Breast epithelium (tissue), 4 donors: ENCODE measurements at regions of chr3 and their contacts with region 1.

Region 1: DNA sequence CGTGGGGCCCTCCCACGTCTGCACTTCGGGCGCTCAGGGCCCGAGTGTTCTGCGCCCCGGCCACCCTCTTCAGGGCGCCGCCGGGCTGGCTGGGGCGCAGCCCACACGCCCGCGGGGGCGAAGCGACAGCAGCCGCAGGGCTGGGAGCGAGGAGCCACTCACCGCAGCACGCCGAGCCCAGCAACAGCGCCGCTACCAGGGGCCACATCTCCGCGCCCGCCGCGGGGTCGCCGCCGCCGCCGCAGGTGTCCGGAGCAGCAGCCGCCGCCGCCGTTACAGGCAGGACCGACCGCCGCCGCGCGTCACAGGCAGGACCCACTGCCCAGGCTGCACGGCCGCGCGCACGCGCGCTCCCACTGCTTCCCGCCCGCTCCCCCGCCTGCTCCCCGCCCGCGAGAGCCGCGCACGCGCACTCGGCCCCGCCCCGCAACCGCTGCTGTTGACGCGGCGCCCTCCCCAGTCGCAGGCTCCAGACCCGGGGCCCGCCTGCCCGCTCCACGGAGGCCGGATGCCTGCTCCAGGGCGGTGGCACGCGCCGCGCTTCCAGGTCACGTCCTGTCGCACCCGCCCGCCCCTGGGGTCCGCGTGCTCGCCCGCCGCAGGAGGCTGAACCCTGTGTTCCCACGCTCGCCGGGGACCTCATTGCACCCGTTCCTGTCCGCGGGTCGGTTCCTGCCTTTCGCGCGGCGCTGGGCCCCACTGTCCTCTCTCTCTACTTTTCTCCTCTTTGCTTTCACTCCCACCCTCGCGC is at the start of gene CD47:
- DNase-seq: peak; percentile 91 to 93
- H3K4me3 ChIP-seq: peak within 1 kb of the TSS; percentile 80 to 97 (median 96)
- H3K27ac ChIP-seq: peak within 1 kb of the TSS; percentile 92 to 96
- H3K4me1 ChIP-seq: peaks cover 0 to 4% of the 10 kb centered on the region in 2 donors
- H3K27me3 ChIP-seq: no peaks in the 10 kb centered on the region
- CTCF ChIP-seq: no peak
- POLR2A ChIP-seq: peak; percentile 50
- total RNA-seq, gene CD47: 52.8 to 126 (median 85.5) TPM

Region 2: DNA sequence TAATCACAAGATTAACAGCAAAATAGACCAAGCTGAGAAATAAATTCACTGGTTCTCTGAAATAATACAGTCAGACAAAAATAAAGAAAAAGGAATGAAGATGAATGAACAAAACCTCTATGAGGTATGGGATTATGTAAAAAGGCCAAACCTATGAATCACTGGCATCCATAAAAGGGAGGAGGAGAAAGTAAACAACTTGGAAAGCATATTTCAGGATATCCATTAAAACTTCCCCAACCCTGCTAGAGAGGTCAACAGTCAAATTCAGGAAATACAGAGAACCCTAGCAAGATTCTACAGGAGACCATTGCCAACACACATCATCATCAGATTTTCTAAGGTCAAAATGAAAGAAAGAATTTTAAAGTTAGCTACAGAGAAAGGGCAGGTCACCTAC is 1572.4 kb before region 1 on chr3:
- intact Hi-C with region 1: no loop called
- DNase-seq: no peak
- H3K4me3 ChIP-seq: no peak overlapping the region
- H3K27ac ChIP-seq: no peak overlapping the region
- H3K4me1 ChIP-seq: no peaks in the 10 kb centered on the region
- H3K27me3 ChIP-seq: no peaks in the 10 kb centered on the region
- CTCF ChIP-seq: no peak
- POLR2A ChIP-seq: no peak

Region 3: DNA sequence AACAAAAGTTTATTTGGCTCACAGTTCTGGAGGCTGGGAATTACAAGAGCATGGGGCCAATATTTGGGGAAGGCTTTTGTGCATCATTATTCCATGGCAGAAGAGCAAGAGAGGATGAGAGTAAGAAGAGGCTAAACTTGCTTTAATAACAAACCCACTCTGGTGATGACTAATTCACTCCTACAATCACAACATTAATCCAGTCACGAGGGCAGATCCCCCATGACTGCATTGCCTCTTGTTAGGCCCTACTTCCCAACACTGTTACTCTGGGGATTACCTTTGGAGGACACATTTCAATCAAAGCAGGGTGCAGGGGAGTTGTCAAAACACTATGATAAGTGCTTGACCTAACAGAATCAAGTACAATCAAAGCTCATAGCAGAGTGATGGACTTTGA is 386.4 kb before region 1 on chr3:
- intact Hi-C with region 1: no loop called
- DNase-seq: no peak
- H3K4me3 ChIP-seq: no peak overlapping the region
- H3K27ac ChIP-seq: no peak overlapping the region
- H3K4me1 ChIP-seq: no peaks in the 10 kb centered on the region
- H3K27me3 ChIP-seq: no peaks in the 10 kb centered on the region
- CTCF ChIP-seq: no peak
- POLR2A ChIP-seq: no peak

Region 4: GRCh38 chr3:108221911-108222852 is 131.3 kb after region 1 on chr3 and contains the start of gene IFT57:
- intact Hi-C with region 1: loop called (anchors 2 kb)
- DNase-seq: peak; percentile 95 to 98
- H3K4me3 ChIP-seq: peak within 1 kb of the TSS; percentile 69 to 87 (median 81)
- H3K27ac ChIP-seq: peak within 1 kb of the TSS; percentile 91 to 94
- H3K4me1 ChIP-seq: peaks cover 0 to 9% of the 10 kb centered on the region in 2 donors
- H3K27me3 ChIP-seq: no peaks in the 10 kb centered on the region
- CTCF ChIP-seq: no peak
- POLR2A ChIP-seq: peak; percentile 30
- total RNA-seq, gene IFT57: 44.2 to 74.2 (median 68.5) TPM